GM12878 (cell line): ENCODE measurements at regions of chr2 and their contacts with region 1.

Region 1: GRCh38 chr2:38581193-38582147 is 21.3 kb downstream of the HNRNPLL start:
- DNase-seq: peak; percentile 23
- ATAC-seq: peak; percentile 92
- H3K4me3 ChIP-seq: no peak overlapping the region
- H3K27ac ChIP-seq: no peak overlapping the region
- H3K4me1 ChIP-seq: no peaks in the 10 kb centered on the region
- H3K27me3 ChIP-seq: no peaks in the 10 kb centered on the region
- CTCF ChIP-seq: peak; percentile 47 to 73 (median 60); a peak in 5 of 6 replicates
- EP300 ChIP-seq: no peak
- POLR2A ChIP-seq: no peak
- RAD21 ChIP-seq: peak; percentile 88

Region 2: DNA sequence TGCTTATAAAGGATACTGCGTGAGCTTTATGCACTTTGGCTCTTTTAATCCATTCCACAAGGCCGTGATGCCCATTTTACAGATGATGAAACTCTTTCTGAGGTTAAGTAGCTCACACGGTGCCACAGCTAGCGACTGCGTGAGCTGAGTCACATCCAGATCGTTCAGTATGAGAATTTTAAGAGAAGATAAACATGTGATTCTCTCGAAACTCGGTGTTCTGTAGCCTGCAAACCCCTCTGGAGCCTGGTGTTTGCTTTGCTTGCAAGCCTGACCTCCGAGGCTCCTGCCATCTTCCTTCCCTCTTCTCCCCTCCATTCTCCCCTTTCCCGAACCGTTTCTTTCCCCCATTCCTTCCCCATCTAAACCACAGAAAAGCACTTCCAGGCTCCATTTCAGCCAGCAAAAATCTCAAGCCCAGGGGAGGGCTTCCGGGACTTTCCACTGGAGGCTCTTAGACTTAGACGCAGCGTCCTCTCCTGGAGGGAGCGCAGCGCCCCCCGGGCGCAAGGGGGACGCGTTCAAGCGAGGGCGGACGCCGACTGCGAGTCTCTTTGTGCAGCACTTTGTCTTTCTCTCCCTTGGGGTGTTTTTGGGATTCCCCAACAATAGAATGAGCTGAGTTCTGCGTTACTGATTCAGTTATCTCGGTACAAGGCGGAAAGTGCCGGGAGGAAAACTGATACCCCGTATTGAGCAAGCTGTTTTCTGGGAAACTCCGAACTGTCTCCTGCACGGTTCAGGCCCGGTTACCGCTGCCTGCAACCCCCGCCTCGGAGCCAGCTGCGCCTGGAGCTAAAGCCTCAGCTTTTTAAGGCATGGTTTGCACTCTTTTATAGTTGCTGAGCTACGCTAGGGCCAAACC is 543.5 kb before region 1 on chr2:
- CTCF ChIA-PET with region 1: no interaction called
- POLR2A ChIA-PET with region 1: no interaction called
- RAD21 ChIA-PET with region 1: no interaction called
- SMC1A ChIA-PET with region 1: no interaction called
- in situ Hi-C with region 1: no loop called
- intact Hi-C with region 1: no loop called
- DNase-seq: peak; percentile 76
- ATAC-seq: peak; percentile 89
- H3K4me3 ChIP-seq: peak overlapping the region; percentile 65
- H3K27ac ChIP-seq: peak overlapping the region; percentile 85
- H3K4me1 ChIP-seq: peaks cover 23% of the 10 kb centered on the region
- H3K27me3 ChIP-seq: no peaks in the 10 kb centered on the region
- CTCF ChIP-seq: peak; percentile 51 to 76 (median 63); a peak in 5 of 6 replicates
- EP300 ChIP-seq: peak; percentile 26 to 40; a peak in 2 of 4 replicates
- POLR2A ChIP-seq: peak; percentile 57
- RAD21 ChIP-seq: peak; percentile 77

Region 3: GRCh38 chr2:38535744-38536506 is 45.5 kb before region 1 on chr2:
- CTCF ChIA-PET with region 1: interaction called, 27 read pairs
- POLR2A ChIA-PET with region 1: no interaction called
- RAD21 ChIA-PET with region 1: interaction called, 12 read pairs
- SMC1A ChIA-PET with region 1: interaction called, 12 read pairs
- in situ Hi-C with region 1: no loop called
- intact Hi-C with region 1: loop called (anchors 2 kb)
- DNase-seq: no peak
- ATAC-seq: peak; percentile 91
- H3K4me3 ChIP-seq: 0 out of 2 replicates have a peak overlapping the region, but pooled peaks have one; percentile 8
- H3K27ac ChIP-seq: no peak overlapping the region
- H3K4me1 ChIP-seq: peaks cover 14% of the 10 kb centered on the region
- H3K27me3 ChIP-seq: no peaks in the 10 kb centered on the region
- CTCF ChIP-seq: peak; percentile 73 to 87 (median 87)
- EP300 ChIP-seq: no peak
- POLR2A ChIP-seq: no peak
- RAD21 ChIP-seq: peak; percentile 75

Region 4: DNA sequence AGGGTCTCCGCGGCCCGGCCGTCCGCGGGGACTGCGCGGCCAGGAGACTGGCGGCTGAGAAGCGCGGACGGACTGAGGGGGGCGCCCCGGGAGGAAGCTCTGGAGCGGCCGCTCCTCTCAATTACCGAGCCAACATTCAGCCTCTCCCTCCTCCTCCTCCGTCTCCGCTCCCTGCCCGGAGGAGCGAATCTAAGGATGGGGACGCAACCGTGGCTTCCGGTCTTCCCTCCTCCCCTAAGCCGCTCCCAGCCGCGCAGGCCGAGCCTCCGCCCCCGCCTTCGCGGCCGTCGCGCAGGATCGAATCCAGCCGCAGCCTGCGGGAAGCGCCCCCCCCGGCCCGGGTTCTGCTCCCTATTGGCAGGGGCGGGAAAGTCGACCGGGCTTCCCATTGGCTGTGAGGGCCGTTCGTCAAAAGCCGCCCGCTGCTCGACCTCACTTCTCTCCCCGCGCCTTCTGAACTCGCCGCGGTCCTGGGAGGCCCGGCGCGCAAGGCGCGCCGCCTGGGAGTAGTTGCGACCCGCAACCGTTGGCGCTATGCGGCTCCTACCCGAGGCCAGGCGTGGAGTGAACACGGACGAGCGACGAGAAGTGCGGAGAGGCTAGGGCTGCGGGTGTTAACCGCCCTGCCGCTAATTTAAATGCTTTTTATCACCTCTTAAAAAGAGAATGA is 21.4 kb after region 1 on chr2 and contains the start of gene HNRNPLL:
- CTCF ChIA-PET with region 1: interaction called, 174 read pairs
- POLR2A ChIA-PET with region 1: no interaction called
- RAD21 ChIA-PET with region 1: interaction called, 130 read pairs
- SMC1A ChIA-PET with region 1: interaction called, 35 read pairs
- in situ Hi-C with region 1: no loop called
- intact Hi-C with region 1: no loop called
- DNase-seq: no peak
- ATAC-seq: peak; percentile 86
- H3K4me3 ChIP-seq: peak within 1 kb of the TSS; percentile 74
- H3K27ac ChIP-seq: peak within 1 kb of the TSS; percentile 51
- H3K4me1 ChIP-seq: peaks cover 15% of the 10 kb centered on the region
- H3K27me3 ChIP-seq: no peaks in the 10 kb centered on the region; a peak in 2 of 4 replicates
- CTCF ChIP-seq: no peak
- EP300 ChIP-seq: no peak; a peak in 1 of 4 replicates
- POLR2A ChIP-seq: peak; percentile 73
- RAD21 ChIP-seq: no peak
- polyA plus RNA-seq, gene HNRNPLL: 0.98 to 1.5 TPM

Region 5: GRCh38 chr2:38709567-38710194 is 128.2 kb after region 1 on chr2:
- CTCF ChIA-PET with region 1: interaction called, 8 read pairs
- POLR2A ChIA-PET with region 1: no interaction called
- RAD21 ChIA-PET with region 1: interaction called, 5 read pairs
- SMC1A ChIA-PET with region 1: interaction called, 11 read pairs
- in situ Hi-C with region 1: no loop called
- intact Hi-C with region 1: no loop called
- DNase-seq: peak; percentile 35
- ATAC-seq: peak; percentile 87
- H3K4me3 ChIP-seq: no peak overlapping the region
- H3K27ac ChIP-seq: no peak overlapping the region
- H3K4me1 ChIP-seq: peaks cover 16% of the 10 kb centered on the region
- H3K27me3 ChIP-seq: no peaks in the 10 kb centered on the region
- CTCF ChIP-seq: no peak
- EP300 ChIP-seq: peak in 1 of 2 experiments; percentile 47; a peak in 2 of 4 replicates
- POLR2A ChIP-seq: no peak
- RAD21 ChIP-seq: no peak

Region 6: DNA sequence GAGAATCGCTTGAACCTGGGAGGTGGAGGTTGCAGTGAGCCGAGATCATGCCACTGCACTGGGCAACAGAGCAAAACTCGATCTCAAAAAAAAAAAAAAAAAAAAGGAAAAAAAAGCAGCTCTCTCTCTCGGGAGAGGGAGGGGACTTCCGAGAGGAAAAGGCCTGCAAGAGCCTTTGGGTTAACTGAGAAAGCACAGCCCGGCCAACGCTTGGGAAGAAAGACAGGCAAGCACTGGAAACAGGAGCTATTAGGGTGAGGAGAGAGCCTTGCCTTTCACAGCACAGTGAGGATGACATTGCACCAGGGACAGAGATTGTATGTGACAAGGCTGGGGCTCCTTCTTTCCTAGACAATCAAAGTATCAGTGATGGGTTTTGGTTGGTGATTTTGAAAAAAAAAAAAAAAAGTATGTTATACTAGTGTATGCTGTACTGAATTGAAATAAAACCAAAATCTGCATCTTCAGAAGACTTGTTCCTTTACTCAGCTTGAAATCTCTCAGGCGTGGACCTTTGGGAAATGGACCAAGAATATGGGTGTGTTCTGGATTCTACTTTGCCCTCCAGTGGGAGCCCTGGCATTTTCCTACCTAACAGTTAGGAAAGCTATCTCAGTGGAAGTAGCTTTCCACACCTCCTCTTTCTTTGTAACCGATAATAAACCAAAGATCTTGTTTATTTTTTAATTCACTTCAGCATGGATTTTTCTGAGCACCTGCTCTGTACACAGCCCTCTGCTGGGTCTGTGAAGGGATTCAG is 153.0 kb after region 1 on chr2:
- CTCF ChIA-PET with region 1: interaction called, 370 read pairs
- POLR2A ChIA-PET with region 1: no interaction called
- RAD21 ChIA-PET with region 1: interaction called, 7 read pairs
- SMC1A ChIA-PET with region 1: interaction called, 14 read pairs
- in situ Hi-C with region 1: loop called (anchors 5 kb)
- intact Hi-C with region 1: no loop called
- DNase-seq: no peak
- ATAC-seq: no peak
- H3K4me3 ChIP-seq: no peak overlapping the region
- H3K27ac ChIP-seq: no peak overlapping the region
- H3K4me1 ChIP-seq: no peaks in the 10 kb centered on the region
- H3K27me3 ChIP-seq: no peaks in the 10 kb centered on the region
- CTCF ChIP-seq: no peak
- EP300 ChIP-seq: no peak
- POLR2A ChIP-seq: no peak
- RAD21 ChIP-seq: no peak

Region 7: GRCh38 chr2:38835015-38835601 is 253.6 kb after region 1 on chr2:
- CTCF ChIA-PET with region 1: interaction called, 27 read pairs
- POLR2A ChIA-PET with region 1: interaction called, 3 read pairs
- RAD21 ChIA-PET with region 1: interaction called, 10 read pairs
- SMC1A ChIA-PET with region 1: interaction called, 23 read pairs
- in situ Hi-C with region 1: no loop called
- intact Hi-C with region 1: loop called (anchors 1 kb)
- DNase-seq: no peak
- ATAC-seq: peak; percentile 28; the same call in 1 of the 3 replicates
- H3K4me3 ChIP-seq: no peak overlapping the region
- H3K27ac ChIP-seq: no peak overlapping the region
- H3K4me1 ChIP-seq: peaks cover 15% of the 10 kb centered on the region
- H3K27me3 ChIP-seq: no peaks in the 10 kb centered on the region
- CTCF ChIP-seq: peak; percentile 15 to 37 (median 25); a peak in 3 of 6 replicates
- EP300 ChIP-seq: no peak
- POLR2A ChIP-seq: no peak
- RAD21 ChIP-seq: 0 out of 2 replicates have a peak, but pooled peaks have one; percentile 18